ENCODE measurements at regions of chr7 and their contacts with region 1.

Region 1: GRCh38 chr7:92178927-92179924 is at the start of gene LRRD1:
- DNase-seq: peak; percentile 68
- H3K4me3 Mint-ChIP-seq: peak within 1 kb of the TSS; percentile 48
- H3K27ac Mint-ChIP-seq: no peak within 1 kb of the TSS
- H3K4me1 Mint-ChIP-seq: no peaks in the 10 kb centered on the region
- H3K27me3 Mint-ChIP-seq: no peaks in the 10 kb centered on the region
- CTCF ChIP-seq: peak; percentile 57
- total RNA-seq, gene LRRD1: not detected in 2 replicates

Region 2: DNA sequence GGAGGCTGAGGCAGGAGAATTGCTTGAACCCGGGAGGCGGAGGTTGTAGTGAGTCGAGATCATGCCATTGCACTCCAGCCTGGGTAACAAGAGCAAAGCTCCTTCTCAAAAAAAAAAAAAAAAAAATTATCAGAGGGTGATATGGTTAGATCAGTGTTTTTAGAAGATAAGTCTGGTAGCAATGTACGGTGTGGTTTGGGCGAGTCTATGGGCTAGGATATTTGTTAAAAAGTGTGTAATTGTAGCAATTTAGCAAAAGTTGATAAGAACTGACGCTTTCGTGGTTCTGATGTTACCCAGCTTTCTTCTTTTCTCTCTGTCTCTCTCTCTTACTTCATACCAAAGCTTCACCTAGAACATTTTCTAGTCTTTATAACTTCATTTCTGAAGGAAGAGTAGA is 38.1 kb before region 1 on chr7:
- CTCF ChIA-PET with region 1: no interaction called
- POLR2A ChIA-PET with region 1: no interaction called
- intact Hi-C with region 1: no loop called
- DNase-seq: no peak
- H3K4me3 Mint-ChIP-seq: no peak overlapping the region
- H3K27ac Mint-ChIP-seq: no peak overlapping the region
- H3K4me1 Mint-ChIP-seq: peaks cover 2% of the 10 kb centered on the region
- H3K27me3 Mint-ChIP-seq: no peaks in the 10 kb centered on the region
- CTCF ChIP-seq: no peak

Region 3: DNA sequence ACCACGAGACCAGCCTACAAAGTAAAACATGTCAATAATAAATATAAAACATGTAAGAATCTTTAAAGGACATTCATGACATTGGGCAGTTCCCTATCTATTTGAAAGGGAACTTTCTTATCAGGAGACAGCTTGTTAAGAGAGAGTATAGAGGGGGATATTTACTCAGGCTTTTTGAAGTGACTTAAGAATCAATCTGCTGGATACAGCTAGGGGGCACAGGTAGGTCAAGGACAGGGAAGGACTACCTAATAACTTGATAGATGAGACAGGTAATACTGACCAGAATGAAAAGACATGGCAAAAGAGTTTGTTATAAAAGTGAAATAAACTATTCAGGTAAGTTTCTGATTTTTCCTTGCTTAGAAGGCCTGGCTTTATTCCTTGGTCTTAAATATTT is 21.6 kb after region 1 on chr7:
- CTCF ChIA-PET with region 1: interaction called, 10 read pairs
- POLR2A ChIA-PET with region 1: no interaction called
- intact Hi-C with region 1: no loop called
- DNase-seq: no peak
- H3K4me3 Mint-ChIP-seq: no peak overlapping the region
- H3K27ac Mint-ChIP-seq: no peak overlapping the region
- H3K4me1 Mint-ChIP-seq: no peaks in the 10 kb centered on the region
- H3K27me3 Mint-ChIP-seq: no peaks in the 10 kb centered on the region
- CTCF ChIP-seq: no peak

Region 4: DNA sequence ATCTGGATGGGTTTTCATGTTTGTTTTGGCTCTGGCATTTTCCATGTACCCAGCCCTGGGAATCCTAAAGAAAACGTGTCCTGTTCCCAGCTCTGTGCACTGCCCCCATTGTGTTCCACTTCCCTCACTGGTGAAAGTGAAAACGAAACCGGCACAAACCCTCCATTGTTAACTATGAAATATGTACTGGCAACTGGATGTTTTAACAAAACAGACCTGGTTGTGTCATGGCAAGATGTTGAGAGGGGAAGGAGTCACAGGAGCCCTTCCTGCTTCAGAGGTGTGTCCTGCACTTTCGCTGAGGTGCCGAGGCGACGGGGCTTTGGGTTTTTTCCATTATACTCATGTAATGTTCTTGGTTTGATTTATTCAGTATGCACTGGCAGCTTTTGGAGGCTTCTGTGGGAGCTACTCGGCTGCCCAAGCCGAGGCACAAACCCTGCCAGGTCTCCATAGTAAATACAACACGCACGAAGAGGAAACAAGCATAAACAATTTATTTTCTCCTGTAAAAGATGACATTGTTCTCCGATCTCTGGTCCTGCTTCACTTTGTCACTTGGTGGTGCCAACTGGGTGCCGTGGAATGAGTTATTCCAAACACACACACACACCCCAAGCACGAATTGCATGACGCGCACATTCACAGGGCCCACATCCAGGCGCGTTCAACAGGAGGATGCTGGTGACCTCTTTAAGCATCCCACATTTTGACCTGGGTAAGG is 538.9 kb after region 1 on chr7:
- CTCF ChIA-PET with region 1: no interaction called
- POLR2A ChIA-PET with region 1: no interaction called
- intact Hi-C with region 1: no loop called
- DNase-seq: peak; percentile 83
- H3K4me3 Mint-ChIP-seq: peak overlapping the region; percentile 81
- H3K27ac Mint-ChIP-seq: peak overlapping the region; percentile 96
- H3K4me1 Mint-ChIP-seq: peaks cover 28% of the 10 kb centered on the region
- H3K27me3 Mint-ChIP-seq: no peaks in the 10 kb centered on the region
- CTCF ChIP-seq: no peak

Measured in MCF 10A (cell line).